ENCODE measurements at regions of chr1 and their contacts with region 1.

Region 1: GRCh38 chr1:108643492-108644335 is 17.2 kb downstream of the HENMT1 start:
- DNase-seq: peak; percentile 70
- H3K4me3 ChIP-seq: no peak overlapping the region
- H3K27ac ChIP-seq: no peak overlapping the region
- H3K4me1 ChIP-seq: peaks cover 0 to 4% of the 10 kb centered on the region in 2 experiments; a peak in 1 of 4 replicates
- H3K27me3 ChIP-seq: no peaks in the 10 kb centered on the region
- CTCF ChIP-seq: peak; percentile 85
- EP300 ChIP-seq: no peak
- RAD21 ChIP-seq: peak; percentile 91

Region 2: GRCh38 chr1:108512239-108512981 is 131.3 kb before region 1 on chr1:
- CTCF ChIA-PET with region 1: interaction called, 80 read pairs
- POLR2A ChIA-PET with region 1: no interaction called
- DNase-seq: peak; percentile 41
- H3K4me3 ChIP-seq: peak overlapping the region in 1 of 2 experiments; percentile 37; a peak in 1 of 4 replicates
- H3K27ac ChIP-seq: no peak overlapping the region
- H3K4me1 ChIP-seq: no peaks in the 10 kb centered on the region; a peak in 1 of 4 replicates
- H3K27me3 ChIP-seq: no peaks in the 10 kb centered on the region
- CTCF ChIP-seq: peak; percentile 96
- EP300 ChIP-seq: no peak
- RAD21 ChIP-seq: peak; percentile 96

Region 3: DNA sequence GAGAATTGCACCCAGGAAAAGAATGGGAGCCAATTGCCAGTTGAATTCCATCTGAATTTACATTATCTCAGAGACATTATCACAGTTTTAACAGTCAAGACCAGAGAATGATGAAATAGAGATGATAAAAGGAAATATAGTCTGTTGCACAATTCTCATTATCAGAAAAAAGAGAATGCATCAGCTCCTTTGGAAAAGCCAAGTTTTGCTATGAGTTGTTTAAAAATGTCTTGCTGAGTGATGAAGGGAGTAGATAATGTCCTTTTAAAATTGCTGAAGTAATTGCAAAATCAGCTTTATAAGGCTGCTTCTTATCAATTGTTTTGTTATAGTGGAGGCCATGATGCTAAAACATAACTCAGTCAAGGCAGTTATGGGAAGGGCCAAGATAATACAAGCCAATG is 121.7 kb before region 1 on chr1:
- CTCF ChIA-PET with region 1: interaction called, 10 read pairs
- POLR2A ChIA-PET with region 1: no interaction called
- DNase-seq: no peak
- H3K4me3 ChIP-seq: no peak overlapping the region
- H3K27ac ChIP-seq: no peak overlapping the region
- H3K4me1 ChIP-seq: no peaks in the 10 kb centered on the region
- H3K27me3 ChIP-seq: peaks cover 14% of the 10 kb centered on the region; the same call in 1 of the 2 replicates
- CTCF ChIP-seq: no peak
- EP300 ChIP-seq: no peak
- RAD21 ChIP-seq: no peak

Region 4: GRCh38 chr1:108605633-108606032 is 38.1 kb before region 1 on chr1:
- CTCF ChIA-PET with region 1: no interaction called
- POLR2A ChIA-PET with region 1: no interaction called
- DNase-seq: no peak
- H3K4me3 ChIP-seq: no peak overlapping the region
- H3K27ac ChIP-seq: no peak overlapping the region
- H3K4me1 ChIP-seq: peaks cover under 1 to 18% of the 10 kb centered on the region in 2 experiments; a peak in 3 of 4 replicates
- H3K27me3 ChIP-seq: no peaks in the 10 kb centered on the region
- CTCF ChIP-seq: no peak
- EP300 ChIP-seq: no peak
- RAD21 ChIP-seq: no peak

Region 5: GRCh38 chr1:108661030-108661620 is 17.4 kb after region 1 on chr1 and contains the start of gene HENMT1:
- CTCF ChIA-PET with region 1: interaction called, 13 read pairs
- POLR2A ChIA-PET with region 1: no interaction called
- DNase-seq: peak; percentile 78
- H3K4me3 ChIP-seq: peak within 1 kb of the TSS in 1 of 2 experiments; percentile 45; a peak in 2 of 4 replicates
- H3K27ac ChIP-seq: no peak within 1 kb of the TSS
- H3K4me1 ChIP-seq: no peaks in the 10 kb centered on the region; a peak in 1 of 4 replicates
- H3K27me3 ChIP-seq: no peaks in the 10 kb centered on the region
- CTCF ChIP-seq: no peak
- EP300 ChIP-seq: no peak
- RAD21 ChIP-seq: no peak
- polyA plus RNA-seq, gene HENMT1: 0.03 TPM in 2 replicates

Region 6: GRCh38 chr1:108719656-108720435 is 76.1 kb after region 1 on chr1:
- CTCF ChIA-PET with region 1: no interaction called
- POLR2A ChIA-PET with region 1: no interaction called
- DNase-seq: no peak
- H3K4me3 ChIP-seq: no peak overlapping the region
- H3K27ac ChIP-seq: peak overlapping the region in 1 of 2 experiments; percentile 84; a peak in 2 of 4 replicates
- H3K4me1 ChIP-seq: peaks cover 0 to 19% of the 10 kb centered on the region in 2 experiments; a peak in 1 of 4 replicates
- H3K27me3 ChIP-seq: no peaks in the 10 kb centered on the region
- CTCF ChIP-seq: no peak
- EP300 ChIP-seq: no peak
- RAD21 ChIP-seq: no peak